CD8-positive, alpha-beta T cell (primary cell): ENCODE measurements at regions of chr3 and their contacts with region 1.

Region 1: DNA sequence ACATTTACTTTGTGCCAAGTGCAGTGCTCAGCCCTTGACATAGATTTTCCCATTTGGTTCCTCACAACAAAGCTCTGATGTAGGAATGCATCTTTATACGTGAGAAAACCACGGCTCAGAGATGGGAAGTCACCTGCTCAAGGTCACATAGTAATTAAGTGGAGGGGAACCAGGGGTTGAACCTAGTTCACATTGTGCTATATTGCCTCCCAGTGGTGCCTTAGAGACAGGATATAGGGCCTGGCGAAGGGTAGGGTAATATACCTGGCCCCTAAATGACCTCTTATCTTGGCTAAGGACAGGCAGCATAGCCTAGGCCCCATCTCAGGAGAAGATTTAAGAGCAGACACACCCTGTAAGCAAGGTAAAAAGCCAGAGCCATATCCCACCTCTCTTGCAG is 71.5 kb downstream of the FOXP1 start:
- DNase-seq: peak in 7 of 9 experiments; percentile 23 to 86 (median 54)
- ATAC-seq: peak; percentile 98
- H3K4me3 ChIP-seq: no peak overlapping the region
- H3K4me3 Mint-ChIP-seq: no peak overlapping the region
- H3K27ac ChIP-seq: no peak overlapping the region
- H3K27ac Mint-ChIP-seq: peak overlapping the region; percentile 76
- H3K4me1 ChIP-seq: peaks cover 30% of the 10 kb centered on the region
- H3K4me1 Mint-ChIP-seq: peaks cover 23% of the 10 kb centered on the region
- H3K27me3 ChIP-seq: no peaks in the 10 kb centered on the region
- H3K27me3 Mint-ChIP-seq: no peaks in the 10 kb centered on the region
- CTCF ChIP-seq: peak; percentile 67

Region 2: DNA sequence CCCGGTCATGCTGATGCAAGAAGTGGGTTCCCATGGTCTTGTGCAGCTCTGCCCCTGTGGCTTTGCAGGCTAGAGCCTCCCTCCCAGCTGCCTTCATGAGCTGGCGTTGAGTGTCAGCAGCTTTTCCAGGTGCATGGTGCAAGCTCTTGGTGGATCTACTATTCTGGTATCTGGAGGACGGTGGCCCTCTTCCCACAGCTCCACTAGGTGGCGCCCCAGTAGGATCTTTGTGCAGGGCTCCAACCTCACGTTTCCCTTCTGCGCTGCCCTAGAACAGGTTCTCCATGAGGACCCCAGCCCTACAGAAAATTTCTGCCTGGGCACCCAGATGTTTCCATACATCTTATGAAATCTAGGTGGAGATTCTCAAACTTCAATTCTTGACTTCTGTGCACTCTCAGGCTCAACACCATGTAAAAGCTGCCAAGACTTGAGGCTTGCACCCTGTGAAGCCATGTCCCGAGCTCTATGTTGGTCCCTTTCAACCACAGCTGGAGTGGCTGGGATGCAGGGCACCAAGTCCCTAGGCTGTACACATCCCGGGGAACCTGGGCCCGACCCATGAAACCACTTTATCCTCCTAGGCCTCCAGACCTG is 961.2 kb before region 1 on chr3:
- CTCF ChIA-PET with region 1: interaction called, 6 read pairs
- POLR2A ChIA-PET with region 1: no interaction called
- intact Hi-C with region 1: loop called in 1 of 2 experiments (anchors 5 kb)
- DNase-seq: peak; percentile 43 to 82 (median 68)
- ATAC-seq: peak; percentile 76
- H3K4me3 ChIP-seq: no peak overlapping the region
- H3K4me3 Mint-ChIP-seq: no peak overlapping the region
- H3K27ac ChIP-seq: no peak overlapping the region
- H3K27ac Mint-ChIP-seq: no peak overlapping the region
- H3K4me1 ChIP-seq: no peaks in the 10 kb centered on the region
- H3K4me1 Mint-ChIP-seq: no peaks in the 10 kb centered on the region
- H3K27me3 ChIP-seq: no peaks in the 10 kb centered on the region
- H3K27me3 Mint-ChIP-seq: peaks cover 2% of the 10 kb centered on the region
- CTCF ChIP-seq: peak; percentile 60

Region 3: GRCh38 chr3:71006810-71007785 is 504.9 kb before region 1 on chr3:
- CTCF ChIA-PET with region 1: interaction called, 13 read pairs
- POLR2A ChIA-PET with region 1: no interaction called
- intact Hi-C with region 1: loop called in 1 of 2 experiments (anchors 1 kb)
- DNase-seq: peak in 2 of 9 experiments; percentile 44 to 64
- ATAC-seq: no peak
- H3K4me3 ChIP-seq: no peak overlapping the region
- H3K4me3 Mint-ChIP-seq: no peak overlapping the region
- H3K27ac ChIP-seq: no peak overlapping the region
- H3K27ac Mint-ChIP-seq: peak overlapping the region; percentile 85
- H3K4me1 ChIP-seq: peaks cover 54% of the 10 kb centered on the region
- H3K4me1 Mint-ChIP-seq: peaks cover 74% of the 10 kb centered on the region
- H3K27me3 ChIP-seq: no peaks in the 10 kb centered on the region
- H3K27me3 Mint-ChIP-seq: no peaks in the 10 kb centered on the region
- CTCF ChIP-seq: peak; percentile 30

Region 4: DNA sequence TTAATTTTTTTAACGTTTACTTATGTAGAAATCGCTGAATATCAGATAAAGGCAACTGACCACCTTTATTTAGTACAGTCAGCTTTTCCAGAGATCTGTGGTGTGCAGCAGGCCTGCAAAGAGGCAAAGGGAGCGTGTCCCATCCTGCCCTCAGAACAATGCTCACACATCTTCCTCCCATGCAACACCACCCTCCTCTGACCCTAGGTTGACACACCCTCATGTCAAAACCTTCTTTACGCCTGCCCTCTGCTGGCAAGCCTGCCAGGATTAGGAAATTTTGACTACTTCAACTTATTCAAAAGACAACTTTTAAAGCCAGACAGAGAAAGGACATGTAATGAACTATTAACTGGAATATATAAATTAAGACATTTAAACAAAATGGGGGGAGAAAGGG is 442.2 kb before region 1 on chr3:
- CTCF ChIA-PET with region 1: interaction called, 4 read pairs
- POLR2A ChIA-PET with region 1: no interaction called
- intact Hi-C with region 1: loop called (anchors 2 to 5 kb)
- DNase-seq: peak; percentile 57 to 81 (median 72)
- ATAC-seq: peak; percentile 29
- H3K4me3 ChIP-seq: no peak overlapping the region
- H3K4me3 Mint-ChIP-seq: no peak overlapping the region
- H3K27ac ChIP-seq: no peak overlapping the region
- H3K27ac Mint-ChIP-seq: peak overlapping the region; percentile 91
- H3K4me1 ChIP-seq: peaks cover 89% of the 10 kb centered on the region
- H3K4me1 Mint-ChIP-seq: peaks cover 84% of the 10 kb centered on the region
- H3K27me3 ChIP-seq: no peaks in the 10 kb centered on the region
- H3K27me3 Mint-ChIP-seq: no peaks in the 10 kb centered on the region
- CTCF ChIP-seq: peak; percentile 67

Region 5: GRCh38 chr3:71416876-71417275 is 95.1 kb before region 1 on chr3:
- CTCF ChIA-PET with region 1: interaction called, 6 read pairs
- POLR2A ChIA-PET with region 1: no interaction called
- intact Hi-C with region 1: loop called (anchors 2 to 5 kb)
- DNase-seq: peak in 6 of 9 experiments; percentile 41 to 82 (median 60)
- ATAC-seq: peak; percentile 67
- H3K4me3 ChIP-seq: peak overlapping the region in 1 of 2 experiments; percentile 11
- H3K4me3 Mint-ChIP-seq: peak overlapping the region; percentile 54
- H3K27ac ChIP-seq: peak overlapping the region; percentile 60 to 63
- H3K27ac Mint-ChIP-seq: peak overlapping the region; percentile 93
- H3K4me1 ChIP-seq: peaks cover 81% of the 10 kb centered on the region
- H3K4me1 Mint-ChIP-seq: peaks cover 92% of the 10 kb centered on the region
- H3K27me3 ChIP-seq: no peaks in the 10 kb centered on the region
- H3K27me3 Mint-ChIP-seq: no peaks in the 10 kb centered on the region
- CTCF ChIP-seq: peak; percentile 31

Region 6: DNA sequence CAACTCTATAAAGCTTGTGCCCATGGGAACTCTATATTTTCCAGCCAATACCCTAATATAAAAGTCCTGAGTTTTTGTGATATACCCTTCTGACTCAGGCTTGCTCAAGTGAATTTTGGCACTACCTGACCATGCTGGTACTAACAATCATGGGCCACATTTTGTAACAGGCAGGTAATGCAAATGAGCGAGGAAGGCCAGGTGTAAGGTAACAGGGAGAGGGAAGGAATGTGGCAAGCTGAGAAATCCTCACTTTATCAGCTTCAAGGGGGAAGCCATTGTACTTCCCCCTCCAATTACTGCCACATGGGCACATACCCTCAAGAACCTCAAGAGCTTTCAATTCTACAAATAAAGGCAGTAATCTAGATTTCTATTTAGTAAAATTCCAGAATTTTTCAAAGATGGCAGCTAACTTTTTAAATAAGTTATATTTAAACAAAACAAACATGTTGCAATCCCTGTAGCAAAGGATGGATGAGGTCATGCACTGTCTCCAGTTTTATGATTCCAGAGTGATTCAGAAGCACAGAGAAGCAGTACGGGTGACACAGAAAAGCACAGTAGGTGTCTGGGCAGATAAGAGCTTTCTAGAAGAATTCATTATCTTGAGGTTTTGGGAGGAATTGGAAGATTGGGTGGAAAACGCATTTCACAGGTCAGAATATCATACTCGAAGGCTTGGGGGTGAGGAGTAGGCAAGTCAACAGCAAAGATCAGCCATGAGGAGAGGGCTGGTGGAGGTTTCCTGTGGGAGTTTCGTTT is 16.1 kb before region 1 on chr3:
- CTCF ChIA-PET with region 1: interaction called, 40 read pairs
- POLR2A ChIA-PET with region 1: interaction called, 4 read pairs
- intact Hi-C with region 1: loop called in 1 of 2 experiments (anchors 2 kb)
- DNase-seq: peak in 2 of 9 experiments; percentile 48 to 69
- ATAC-seq: no peak
- H3K4me3 ChIP-seq: peak overlapping the region; percentile 38 to 39
- H3K4me3 Mint-ChIP-seq: peak overlapping the region; percentile 76
- H3K27ac ChIP-seq: peak overlapping the region; percentile 46 to 80
- H3K27ac Mint-ChIP-seq: peak overlapping the region; percentile 94
- H3K4me1 ChIP-seq: peaks cover 65% of the 10 kb centered on the region
- H3K4me1 Mint-ChIP-seq: peaks cover 83% of the 10 kb centered on the region
- H3K27me3 ChIP-seq: no peaks in the 10 kb centered on the region
- H3K27me3 Mint-ChIP-seq: no peaks in the 10 kb centered on the region
- CTCF ChIP-seq: no peak